GM12878 (cell line): ENCODE measurements at regions of chr3 and their contacts with region 1.

Region 1: GRCh38 chr3:141011232-141011996 is 39.7 kb upstream of the SPSB4 start:
- DNase-seq: no peak
- ATAC-seq: peak; percentile 97
- H3K4me3 ChIP-seq: no peak overlapping the region
- H3K27ac ChIP-seq: no peak overlapping the region
- H3K4me1 ChIP-seq: no peaks in the 10 kb centered on the region
- H3K27me3 ChIP-seq: no peaks in the 10 kb centered on the region
- CTCF ChIP-seq: peak; percentile 74 to 90 (median 76)
- EP300 ChIP-seq: no peak
- POLR2A ChIP-seq: no peak
- RAD21 ChIP-seq: peak; percentile 56

Region 2: GRCh38 chr3:141192345-141192744 is 180.9 kb after region 1 on chr3:
- CTCF ChIA-PET with region 1: interaction called, 29 read pairs
- POLR2A ChIA-PET with region 1: no interaction called
- RAD21 ChIA-PET with region 1: interaction called, 7 read pairs
- SMC1A ChIA-PET with region 1: interaction called, 3 read pairs
- in situ Hi-C with region 1: no loop called
- intact Hi-C with region 1: loop called (anchors 1 kb)
- DNase-seq: peak; percentile 64
- ATAC-seq: peak; percentile 100
- H3K4me3 ChIP-seq: no peak overlapping the region
- H3K27ac ChIP-seq: no peak overlapping the region
- H3K4me1 ChIP-seq: no peaks in the 10 kb centered on the region
- H3K27me3 ChIP-seq: no peaks in the 10 kb centered on the region; a peak in 1 of 4 replicates
- CTCF ChIP-seq: peak; percentile 93 to 99 (median 94)
- EP300 ChIP-seq: no peak
- POLR2A ChIP-seq: no peak
- RAD21 ChIP-seq: peak; percentile 90